ENCODE measurements at regions of chr6 and their contacts with region 1.

Region 1: GRCh38 chr6:35477551-35478401 is 9.6 kb downstream of the RPL10A start:
- DNase-seq: no peak
- ATAC-seq: no peak
- H3K4me3 ChIP-seq: no peak overlapping the region
- H3K27ac ChIP-seq: no peak overlapping the region
- H3K4me1 ChIP-seq: peaks cover 0 to 25% of the 10 kb centered on the region in 2 experiments; a peak in 3 of 5 replicates
- H3K27me3 ChIP-seq: no peaks in the 10 kb centered on the region
- CTCF ChIP-seq: no peak
- EP300 ChIP-seq: no peak
- POLR2A ChIP-seq: no peak
- RAD21 ChIP-seq: no peak

Region 2: GRCh38 chr6:35489995-35490733 is 12.4 kb after region 1 on chr6:
- CTCF ChIA-PET with region 1: no interaction called
- POLR2A ChIA-PET with region 1: interaction called, 167 read pairs
- in situ Hi-C with region 1: no loop called
- intact Hi-C with region 1: no loop called
- DNase-seq: peak; percentile 83 to 90 (median 87)
- ATAC-seq: peak; percentile 86
- H3K4me3 ChIP-seq: no peak overlapping the region
- H3K27ac ChIP-seq: peak overlapping the region; percentile 67
- H3K4me1 ChIP-seq: peaks cover 53 to 72% of the 10 kb centered on the region in 2 experiments
- H3K27me3 ChIP-seq: no peaks in the 10 kb centered on the region
- CTCF ChIP-seq: no peak
- EP300 ChIP-seq: 0 out of 2 replicates have a peak, but pooled peaks have one; percentile 13
- POLR2A ChIP-seq: no peak
- RAD21 ChIP-seq: no peak